ENCODE measurements at regions of chr19 and their contacts with region 1.

Region 1: DNA sequence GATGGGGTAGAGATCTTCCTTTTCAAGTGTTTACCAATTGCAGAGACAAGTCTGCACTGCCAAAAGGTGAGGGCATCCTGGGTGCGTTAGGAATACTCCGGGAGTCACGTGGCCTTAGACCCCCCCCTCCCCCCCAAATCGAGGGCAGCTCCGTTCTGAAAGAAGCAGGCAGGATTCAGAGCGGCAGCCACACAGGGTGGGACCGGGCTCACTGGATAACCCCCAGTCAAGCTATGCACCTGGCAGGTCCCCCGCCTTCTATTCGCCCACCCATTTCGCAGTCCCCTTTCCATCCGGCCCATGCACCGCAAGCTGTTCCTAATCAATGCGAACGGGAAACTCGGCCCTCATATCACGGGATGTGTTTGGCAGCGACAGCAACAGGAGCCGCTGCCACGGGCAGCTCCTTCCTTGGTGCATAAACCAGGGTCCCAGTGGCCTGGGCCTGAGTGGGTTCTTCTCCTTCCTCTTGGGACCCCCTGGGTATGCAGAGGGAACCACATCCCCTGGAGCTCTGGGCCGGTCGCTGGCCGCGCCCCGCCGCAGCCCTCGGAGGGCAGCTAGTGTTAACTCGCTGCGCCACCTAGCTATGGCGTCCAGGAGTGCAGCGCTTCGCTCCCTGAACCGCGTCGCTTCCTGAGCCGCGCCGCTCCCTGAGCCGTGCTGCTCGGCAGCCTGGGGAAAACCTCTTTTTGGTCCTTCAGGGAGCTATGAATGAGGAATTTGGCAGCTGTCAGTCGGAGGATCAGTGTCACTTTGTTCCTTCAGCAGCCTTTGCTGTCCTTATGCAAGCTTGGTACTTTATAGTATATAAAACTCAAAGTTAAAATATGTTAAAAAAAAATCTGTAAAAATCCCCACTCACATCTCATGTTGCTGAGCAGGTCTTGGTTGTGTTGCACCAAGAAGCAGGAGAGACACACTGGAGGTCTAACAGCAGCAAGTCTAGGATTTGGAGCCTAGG is 41.4 kb downstream of the LYL1 start:
- DNase-seq: peak; percentile 94

Region 2: DNA sequence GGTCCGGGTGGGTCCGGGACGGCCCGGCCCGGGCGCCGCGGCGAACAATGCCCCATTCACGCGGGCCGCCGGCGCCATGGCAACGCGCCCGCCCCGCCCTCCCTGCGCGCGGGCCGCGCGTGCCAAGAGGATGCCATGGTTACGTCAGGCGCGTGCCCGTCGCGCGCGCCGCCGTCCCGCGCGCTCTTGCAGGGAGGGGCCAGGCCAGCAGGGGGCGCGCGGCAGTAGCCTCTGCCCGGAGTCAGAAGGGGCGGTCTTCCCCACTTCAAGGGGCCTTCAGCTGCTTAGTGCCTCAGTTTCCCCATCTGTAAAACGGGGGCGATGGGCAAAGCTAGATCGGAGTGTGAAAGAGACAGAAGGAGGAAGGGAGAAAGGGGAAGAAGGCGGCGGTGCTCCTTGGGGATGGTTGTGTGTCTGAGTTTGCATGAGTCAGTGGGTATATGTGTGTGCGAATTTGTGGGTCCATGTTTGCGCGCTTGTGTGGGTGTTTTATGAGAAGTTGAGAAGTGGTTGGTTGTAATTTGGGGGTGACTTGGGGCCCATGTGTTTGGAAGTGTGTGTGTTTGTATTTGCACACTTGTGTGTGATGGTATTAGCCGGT is 77.6 kb before region 1 on chr19:
- intact Hi-C with region 1: loop called (anchors 1 kb)
- DNase-seq: peak; percentile 90

Region 3: DNA sequence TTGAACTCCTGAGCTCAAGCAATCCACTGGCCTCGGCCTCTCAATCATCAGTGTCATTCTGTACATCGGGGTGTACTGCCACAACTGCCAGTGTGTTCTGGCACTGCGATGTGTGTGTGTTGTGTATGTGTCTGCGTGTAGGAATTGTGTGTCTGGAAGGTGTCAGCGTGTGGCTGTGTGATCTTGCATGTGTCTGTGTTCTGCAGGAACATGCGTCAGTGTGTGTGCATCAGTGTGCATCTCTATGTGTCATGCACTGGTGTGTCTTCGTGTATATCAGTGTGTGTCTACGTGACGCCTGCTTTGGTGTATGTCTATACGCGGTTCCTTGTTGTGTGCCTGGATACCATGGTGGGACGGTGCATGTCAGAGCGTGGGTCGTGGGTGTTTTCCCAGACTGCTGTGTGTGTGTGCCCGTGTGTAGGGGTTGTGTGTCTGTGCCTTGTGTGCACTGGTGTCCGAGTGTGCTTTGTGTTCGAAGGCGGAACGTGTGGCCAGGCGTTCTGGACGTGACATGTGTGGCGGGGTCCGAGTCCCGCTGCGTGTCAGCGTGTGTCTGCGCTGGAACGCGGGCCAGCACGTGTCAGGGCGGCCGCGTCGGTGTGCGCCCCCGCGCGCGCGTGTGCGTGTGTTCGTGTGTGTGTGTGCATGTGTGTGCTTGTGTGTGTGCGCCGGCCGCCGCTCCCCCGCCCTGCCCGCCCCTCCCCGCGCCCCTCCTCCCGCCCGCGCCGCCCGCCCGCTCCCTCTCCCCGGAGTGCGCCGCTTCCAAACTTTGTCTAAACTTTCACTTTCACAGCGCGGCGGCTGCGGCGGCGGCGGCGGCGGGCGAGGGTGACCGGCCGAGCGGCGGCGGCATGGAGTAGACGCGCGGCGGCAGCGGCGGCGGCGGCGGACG is 66.3 kb before region 1 on chr19 and contains the start of gene NFIX:
- intact Hi-C with region 1: loop called (anchors 5 kb)
- DNase-seq: no peak
- total RNA-seq, gene NFIX: 123 TPM

Region 4: DNA sequence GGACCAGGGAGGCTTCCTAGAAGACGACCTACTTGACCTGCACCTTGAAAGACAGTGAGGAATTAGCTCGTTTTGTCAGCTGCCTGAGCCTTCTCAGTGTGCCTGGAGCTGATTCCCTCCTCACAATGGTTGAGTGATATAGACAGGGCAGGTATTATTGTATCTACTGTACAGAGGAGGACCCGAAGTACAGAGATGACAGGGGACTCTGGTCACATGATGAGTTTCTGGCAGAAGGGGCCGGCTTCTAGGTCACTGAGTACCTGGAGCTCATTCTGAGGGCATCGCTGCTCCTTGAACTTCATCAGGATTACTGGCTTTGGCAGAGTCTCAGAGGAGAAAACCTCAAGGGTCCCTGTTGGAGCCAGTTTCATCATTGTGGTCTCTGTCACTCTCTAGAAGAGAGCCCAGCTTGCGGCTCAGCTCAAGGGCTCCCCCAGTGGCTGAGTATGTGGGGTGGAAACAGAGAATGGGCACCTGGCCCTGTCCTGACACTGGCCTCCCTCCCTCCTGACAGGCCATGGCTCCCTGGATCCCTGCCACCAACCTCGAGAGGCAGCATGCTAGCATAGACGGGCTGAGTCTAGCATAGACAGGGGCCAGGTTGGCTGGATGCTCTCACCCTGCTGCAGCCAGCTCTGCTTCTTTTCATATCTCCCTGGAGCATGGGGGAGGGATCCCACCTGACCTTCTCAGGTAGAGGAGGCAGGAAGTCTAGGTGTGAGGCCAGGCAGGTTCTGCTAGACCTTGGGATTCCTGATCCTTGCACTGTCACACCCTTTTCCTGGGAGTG is 27.2 kb before region 1 on chr19:
- intact Hi-C with region 1: loop called (anchors 1 kb)
- DNase-seq: peak; percentile 90

Region 5: DNA sequence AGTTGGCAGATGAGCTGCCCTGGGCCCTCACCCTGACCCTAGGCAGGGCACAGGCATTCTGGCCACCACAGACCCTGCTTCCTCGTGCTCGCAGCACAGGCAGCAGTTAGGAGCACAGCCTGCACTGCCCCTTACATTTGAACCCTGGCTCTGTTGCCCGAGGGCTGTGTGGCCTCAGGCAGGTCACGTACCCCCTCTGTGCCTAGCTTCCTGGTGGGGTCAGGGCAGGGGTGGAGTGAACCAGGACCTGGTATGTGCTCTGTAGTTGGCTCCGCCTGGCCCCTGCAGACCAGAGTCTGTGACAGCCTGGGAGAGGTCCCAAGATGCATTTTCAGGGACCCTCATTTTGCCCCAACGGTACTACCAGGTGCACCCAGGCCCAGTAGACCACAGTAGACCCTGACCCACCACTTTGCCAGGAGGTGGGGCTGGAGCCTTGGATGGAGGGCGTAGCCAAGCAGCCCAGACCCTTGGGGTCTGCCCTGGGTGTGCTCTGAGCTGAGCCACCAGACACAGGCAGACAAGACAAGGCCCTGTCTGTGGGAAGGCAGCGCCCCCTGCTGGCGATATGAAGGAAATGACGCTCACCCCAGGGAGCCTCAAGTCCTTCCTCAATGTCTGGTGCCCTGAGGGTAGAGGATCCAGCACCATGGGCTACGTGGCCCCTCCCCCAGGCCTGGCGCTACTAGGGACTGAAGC is 32.3 kb after region 1 on chr19:
- intact Hi-C with region 1: loop called (anchors 2 kb)
- DNase-seq: peak; percentile 94

Measured in cardiac septum (tissue), 1 donor.